ENCODE measurements at regions of chr20 and their contacts with region 1.

Region 1: GRCh38 chr20:41339507-41340326 is 904 bp upstream of the LPIN3 start:
- DNase-seq: peak; percentile 81 to 90
- ATAC-seq: peak; percentile 84 to 93 (median 86)
- H3K4me3 ChIP-seq: peak overlapping the region; percentile 52
- H3K27ac ChIP-seq: peak overlapping the region; percentile 60
- H3K4me1 ChIP-seq: peaks cover 11% of the 10 kb centered on the region
- H3K27me3 ChIP-seq: no peaks in the 10 kb centered on the region
- CTCF ChIP-seq: peak; percentile 100

Region 2: DNA sequence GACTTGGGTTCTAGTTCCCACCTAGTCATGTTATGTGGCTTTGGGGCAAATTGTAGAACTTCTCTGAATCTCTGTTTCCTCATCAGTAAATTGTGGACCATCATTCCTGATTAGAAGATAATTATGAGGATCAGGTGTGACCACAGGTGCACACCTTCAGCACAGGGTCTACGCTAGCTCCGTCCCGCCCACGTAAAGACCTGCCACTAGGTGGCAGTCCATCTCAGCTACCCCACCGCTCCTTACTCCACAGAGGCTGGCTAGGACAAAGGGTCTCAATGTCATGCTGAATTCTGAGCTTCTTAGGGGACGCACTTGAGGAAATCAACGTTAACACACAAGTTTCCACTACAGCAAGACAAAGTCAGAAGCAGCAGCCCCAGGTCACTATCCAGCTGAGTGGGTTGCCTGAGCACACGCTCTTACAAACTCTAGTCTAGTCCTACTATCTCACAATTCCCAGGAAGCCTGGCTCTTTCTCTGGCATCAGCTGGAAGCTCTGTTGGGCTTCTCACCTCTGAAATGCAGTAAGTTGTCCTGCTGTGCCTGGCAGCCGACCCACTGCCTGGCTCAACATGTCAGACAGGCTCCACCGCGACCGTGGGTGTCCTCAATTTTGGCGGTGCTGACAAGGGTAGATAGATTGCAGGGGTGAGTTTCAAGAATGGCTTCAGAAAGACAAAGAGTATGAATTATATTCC is 204.4 kb before region 1 on chr20:
- intact Hi-C with region 1: loop called in 1 of 2 experiments (anchors 2 kb)
- DNase-seq: no peak
- ATAC-seq: peak in 1 of 4 donors; percentile 30
- H3K4me3 ChIP-seq: no peak overlapping the region
- H3K27ac ChIP-seq: no peak overlapping the region
- H3K4me1 ChIP-seq: peaks cover 34% of the 10 kb centered on the region
- H3K27me3 ChIP-seq: no peaks in the 10 kb centered on the region
- CTCF ChIP-seq: peak; percentile 75

Region 3: DNA sequence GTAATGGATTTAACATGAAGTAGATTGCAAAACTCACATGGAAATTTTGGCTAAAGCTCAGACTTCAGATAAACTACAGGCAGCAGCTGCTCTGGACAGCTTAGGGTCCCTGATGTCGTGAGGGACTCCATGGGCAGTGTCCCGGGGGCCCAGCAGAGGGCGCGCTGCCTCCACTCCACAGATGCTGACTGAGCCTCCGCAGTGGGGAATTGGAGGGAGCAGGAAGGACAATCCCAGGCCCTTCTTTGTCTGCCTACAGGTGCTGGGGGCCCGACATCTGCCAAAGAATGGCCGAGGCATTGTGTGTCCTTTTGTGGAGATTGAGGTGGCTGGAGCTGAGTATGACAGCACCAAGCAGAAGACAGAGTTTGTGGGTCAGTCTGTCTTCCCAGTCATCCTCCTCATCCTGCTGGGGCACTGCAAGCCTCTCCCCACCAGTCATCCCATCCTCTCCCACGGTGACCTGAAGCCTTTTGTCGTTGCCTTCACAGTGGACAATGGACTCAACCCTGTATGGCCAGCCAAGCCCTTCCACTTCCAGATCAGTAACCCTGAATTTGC is 166.5 kb before region 1 on chr20:
- intact Hi-C with region 1: loop called (anchors 1 to 2 kb)
- DNase-seq: peak; percentile 88 to 93
- ATAC-seq: peak; percentile 83 to 89 (median 86)
- H3K4me3 ChIP-seq: no peak overlapping the region
- H3K27ac ChIP-seq: peak overlapping the region; percentile 71
- H3K4me1 ChIP-seq: peaks cover 53% of the 10 kb centered on the region
- H3K27me3 ChIP-seq: no peaks in the 10 kb centered on the region
- CTCF ChIP-seq: peak; percentile 98

Region 4: GRCh38 chr20:41249406-41250281 is 90.1 kb before region 1 on chr20:
- intact Hi-C with region 1: loop called (anchors 2 to 5 kb)
- DNase-seq: peak; percentile 76 to 88
- ATAC-seq: peak; percentile 81 to 89 (median 88)
- H3K4me3 ChIP-seq: no peak overlapping the region
- H3K27ac ChIP-seq: peak overlapping the region; percentile 72
- H3K4me1 ChIP-seq: peaks cover 52% of the 10 kb centered on the region
- H3K27me3 ChIP-seq: no peaks in the 10 kb centered on the region
- CTCF ChIP-seq: peak; percentile 24

Region 5: GRCh38 chr20:41411391-41411847 is 71.7 kb after region 1 on chr20:
- intact Hi-C with region 1: loop called in 1 of 2 experiments (anchors 2 kb)
- DNase-seq: no peak
- ATAC-seq: peak; percentile 80 to 90 (median 80)
- H3K4me3 ChIP-seq: no peak overlapping the region
- H3K27ac ChIP-seq: peak overlapping the region; percentile 81
- H3K4me1 ChIP-seq: peaks cover 53% of the 10 kb centered on the region
- H3K27me3 ChIP-seq: no peaks in the 10 kb centered on the region
- CTCF ChIP-seq: peak; percentile 53

Region 6: DNA sequence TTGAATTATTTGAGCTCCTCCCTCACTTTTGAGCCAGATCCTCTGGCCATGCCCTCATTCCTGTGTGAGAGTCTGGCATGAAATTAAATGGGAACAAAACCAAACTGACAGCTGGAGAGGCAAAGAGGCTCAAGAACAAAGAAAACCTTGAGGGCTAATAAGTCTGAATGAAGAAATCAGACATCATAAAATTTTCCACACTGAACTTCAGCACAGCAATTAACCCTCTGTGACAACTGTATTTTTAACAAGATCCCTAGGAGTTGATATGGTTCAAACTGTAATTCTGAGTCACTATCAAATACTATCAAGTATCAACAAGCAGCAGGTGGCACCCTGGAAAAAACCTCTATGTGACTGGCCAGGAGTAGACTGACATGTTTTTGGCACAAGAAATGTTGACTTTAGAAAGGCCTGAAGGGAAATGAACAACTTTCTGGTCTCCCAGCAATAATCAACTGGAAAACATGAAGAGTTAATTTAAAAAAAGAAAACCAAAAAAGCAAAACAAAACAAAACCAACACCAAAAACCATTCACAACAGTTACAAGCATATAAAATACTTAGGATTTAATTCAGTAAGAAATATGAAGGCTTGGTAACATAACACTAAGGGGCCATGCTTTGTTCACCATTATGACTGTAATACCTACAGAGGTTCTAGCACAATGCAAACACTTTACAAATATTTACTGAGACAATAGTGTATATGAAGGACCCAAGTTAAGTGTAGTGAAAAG is 136.5 kb after region 1 on chr20:
- intact Hi-C with region 1: no loop called
- DNase-seq: no peak
- ATAC-seq: peak; percentile 93 to 97 (median 95)
- H3K4me3 ChIP-seq: no peak overlapping the region
- H3K27ac ChIP-seq: peak overlapping the region; percentile 81
- H3K4me1 ChIP-seq: peaks cover 22% of the 10 kb centered on the region
- H3K27me3 ChIP-seq: no peaks in the 10 kb centered on the region
- CTCF ChIP-seq: no peak

Region 7: DNA sequence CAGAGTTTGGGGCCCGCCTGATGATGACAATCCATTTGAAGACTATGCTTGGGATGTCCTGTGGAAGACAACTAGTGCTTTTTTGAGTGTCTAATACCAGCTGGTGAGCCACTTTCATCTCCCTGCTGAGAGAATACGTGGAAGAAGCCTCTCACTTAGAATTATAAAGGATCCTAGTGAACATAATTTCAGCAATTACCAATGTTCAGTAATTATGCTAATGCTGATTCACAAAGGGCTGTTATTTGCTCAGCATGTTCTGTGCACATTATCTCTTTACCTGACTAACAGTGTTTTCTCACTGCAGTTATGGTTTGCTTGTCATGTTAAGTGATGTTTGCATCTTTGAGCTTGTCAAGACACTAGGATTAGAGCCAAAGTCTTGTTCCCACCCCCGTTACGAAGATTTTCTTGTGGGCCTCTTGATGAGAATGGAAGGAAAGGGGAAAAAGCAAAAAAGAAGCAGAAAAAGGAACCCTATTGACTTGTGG is 560.5 kb after region 1 on chr20:
- intact Hi-C with region 1: no loop called
- DNase-seq: no peak
- ATAC-seq: no peak
- H3K4me3 ChIP-seq: no peak overlapping the region
- H3K27ac ChIP-seq: no peak overlapping the region
- H3K4me1 ChIP-seq: no peaks in the 10 kb centered on the region
- H3K27me3 ChIP-seq: peaks cover 0 to 12% (median 1%) of the 10 kb centered on the region in 3 donors
- CTCF ChIP-seq: no peak